PC-9 (cell line): ENCODE measurements at regions of chr3 and their contacts with region 1.

Region 1: GRCh38 chr3:164864454-164864853 is 213.8 kb downstream of the SI start:
- DNase-seq: no peak
- H3K4me3 ChIP-seq: no peak overlapping the region
- H3K27ac ChIP-seq: no peak overlapping the region
- H3K4me1 ChIP-seq: no peaks in the 10 kb centered on the region
- H3K27me3 ChIP-seq: no peaks in the 10 kb centered on the region
- CTCF ChIP-seq: no peak

Region 2: GRCh38 chr3:164791263-164791662 is 73.2 kb before region 1 on chr3:
- CTCF ChIA-PET with region 1: no interaction called
- POLR2A ChIA-PET with region 1: no interaction called
- intact Hi-C with region 1: no loop called
- DNase-seq: no peak
- H3K4me3 ChIP-seq: no peak overlapping the region
- H3K27ac ChIP-seq: no peak overlapping the region
- H3K4me1 ChIP-seq: no peaks in the 10 kb centered on the region
- H3K27me3 ChIP-seq: no peaks in the 10 kb centered on the region
- CTCF ChIP-seq: no peak

Region 3: GRCh38 chr3:165273411-165273810 is 409.0 kb after region 1 on chr3:
- CTCF ChIA-PET with region 1: no interaction called
- POLR2A ChIA-PET with region 1: no interaction called
- intact Hi-C with region 1: no loop called
- DNase-seq: no peak
- H3K4me3 ChIP-seq: no peak overlapping the region
- H3K27ac ChIP-seq: no peak overlapping the region
- H3K4me1 ChIP-seq: no peaks in the 10 kb centered on the region
- H3K27me3 ChIP-seq: no peaks in the 10 kb centered on the region
- CTCF ChIP-seq: no peak

Region 4: GRCh38 chr3:166351461-166351860 is 1487.0 kb after region 1 on chr3:
- CTCF ChIA-PET with region 1: no interaction called
- POLR2A ChIA-PET with region 1: interaction called, 14 read pairs
- intact Hi-C with region 1: no loop called
- DNase-seq: no peak
- H3K4me3 ChIP-seq: no peak overlapping the region
- H3K27ac ChIP-seq: no peak overlapping the region
- H3K4me1 ChIP-seq: no peaks in the 10 kb centered on the region
- H3K27me3 ChIP-seq: no peaks in the 10 kb centered on the region
- CTCF ChIP-seq: no peak